Motor neuron (in vitro differentiated cells): ENCODE measurements at regions of chr5 and their contacts with region 1.

Region 1: GRCh38 chr5:159286420-159287035 is 23.4 kb downstream of the UBLCP1 start:
- ATAC-seq: peak in 5 of 8 experiments; percentile 33 to 68 (median 55)
- H3K4me3 ChIP-seq: no peak overlapping the region
- H3K27ac ChIP-seq: no peak overlapping the region
- H3K4me1 ChIP-seq: no peaks in the 10 kb centered on the region

Region 2: GRCh38 chr5:159987031-159987674 is 700.6 kb after region 1 on chr5:
- in situ Hi-C with region 1: loop called in 2 of 9 experiments (anchors 25 kb)
- ATAC-seq: peak; percentile 96 to 100 (median 99)
- H3K4me3 ChIP-seq: peak overlapping the region; percentile 25 to 39 (median 33)
- H3K27ac ChIP-seq: no peak overlapping the region
- H3K4me1 ChIP-seq: no peaks in the 10 kb centered on the region